AG04450 (cell line): ENCODE measurements at regions of chr5 and their contacts with region 1.

Region 1: GRCh38 chr5:55307383-55308253 is at the starts of genes DHX29 and MTREX:
- DNase-seq: peak; percentile 73
- H3K4me3 ChIP-seq: peak within 1 kb of the TSS; percentile 89
- H3K27ac ChIP-seq: peak within 1 kb of the TSS; percentile 99
- H3K27me3 ChIP-seq: no peaks in the 10 kb centered on the region
- CTCF ChIP-seq: no peak
- polyA plus RNA-seq, gene DHX29: 10.8 and 14.3 TPM in 2 replicates
- polyA plus RNA-seq, gene MTREX: 37.2 and 61.7 TPM in 2 replicates

Region 2: DNA sequence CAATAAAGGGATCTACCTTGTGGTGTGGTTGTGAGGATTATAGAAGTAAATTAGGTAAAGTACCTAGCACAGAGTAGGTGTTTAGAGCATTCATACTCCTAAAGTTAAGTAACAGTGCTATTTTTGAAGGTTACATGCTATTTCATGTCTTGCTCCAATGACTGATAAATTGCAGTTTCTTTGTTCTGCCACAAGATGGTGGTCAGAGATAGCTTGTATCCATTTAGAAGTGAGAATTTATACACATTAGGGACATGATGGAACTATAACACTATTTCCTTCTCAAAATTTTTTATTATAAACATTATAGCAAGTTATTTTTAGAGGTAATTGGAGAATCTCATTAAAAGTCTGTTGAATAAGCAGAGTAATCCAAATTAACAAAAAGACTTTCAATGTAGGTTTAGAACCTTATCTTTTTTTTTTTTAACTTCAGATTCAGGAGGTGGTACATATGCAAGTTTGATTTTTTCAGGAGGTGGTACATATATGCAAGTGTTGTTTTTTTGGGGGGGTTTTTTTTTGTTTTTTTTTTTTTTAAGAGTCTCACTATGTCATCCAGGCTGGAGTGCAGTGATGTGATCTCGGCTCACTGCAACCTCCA is 17.3 kb after region 1 on chr5:
- CTCF ChIA-PET with region 1: interaction called, 10 read pairs
- POLR2A ChIA-PET with region 1: interaction called, 5 read pairs
- DNase-seq: no peak
- H3K4me3 ChIP-seq: no peak overlapping the region
- H3K27ac ChIP-seq: no peak overlapping the region
- H3K27me3 ChIP-seq: no peaks in the 10 kb centered on the region
- CTCF ChIP-seq: peak; percentile 71